ENCODE measurements at regions of chr9 and their contacts with region 1.

Region 1: DNA sequence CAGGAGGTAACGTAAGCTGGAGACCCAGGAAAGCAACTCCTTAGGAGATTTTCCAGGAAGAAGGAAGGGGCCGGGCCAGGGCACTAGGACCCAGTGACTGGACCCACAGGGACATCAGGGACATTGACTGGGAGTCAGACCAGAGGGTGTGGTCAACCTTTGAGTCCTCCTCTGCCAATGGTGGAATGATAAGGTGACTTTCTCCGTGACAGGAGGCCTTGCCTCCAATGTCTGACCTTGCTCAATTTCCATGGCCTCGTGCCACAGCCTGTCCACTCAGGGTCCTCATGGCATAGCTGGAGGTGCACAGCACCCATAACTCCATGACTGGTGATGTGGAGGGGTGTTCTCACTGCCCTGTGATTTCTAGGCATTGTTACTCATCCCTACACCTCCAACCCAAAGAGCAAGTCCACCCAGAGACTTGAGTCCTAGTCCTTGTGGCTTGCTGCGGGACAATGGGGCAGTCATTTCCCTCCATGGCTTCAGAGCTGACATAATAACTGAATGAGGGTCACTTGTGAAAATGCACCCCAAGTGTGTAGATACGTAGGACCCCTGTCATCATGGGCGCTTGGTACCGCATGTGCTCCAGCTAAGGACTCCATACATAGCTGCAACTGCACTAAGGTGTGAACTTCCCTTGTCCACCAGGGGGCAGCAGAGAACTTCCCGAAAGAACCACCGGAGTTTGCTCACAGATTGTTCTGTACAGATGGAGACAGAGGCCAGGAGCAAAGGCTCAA is 4.1 kb upstream of the AMBP start:
- DNase-seq: peak; percentile 92 to 94
- ATAC-seq: peak; percentile 74 to 83
- H3K4me3 ChIP-seq: no peak overlapping the region
- H3K27ac ChIP-seq: peak overlapping the region; percentile 93 to 94
- H3K4me1 ChIP-seq: peaks cover 75% of the 10 kb centered on the region
- CTCF ChIP-seq: peak; percentile 92
- EP300 ChIP-seq: no peak
- POLR2A ChIP-seq: no peak
- RAD21 ChIP-seq: peak; percentile 93 to 95

Region 2: DNA sequence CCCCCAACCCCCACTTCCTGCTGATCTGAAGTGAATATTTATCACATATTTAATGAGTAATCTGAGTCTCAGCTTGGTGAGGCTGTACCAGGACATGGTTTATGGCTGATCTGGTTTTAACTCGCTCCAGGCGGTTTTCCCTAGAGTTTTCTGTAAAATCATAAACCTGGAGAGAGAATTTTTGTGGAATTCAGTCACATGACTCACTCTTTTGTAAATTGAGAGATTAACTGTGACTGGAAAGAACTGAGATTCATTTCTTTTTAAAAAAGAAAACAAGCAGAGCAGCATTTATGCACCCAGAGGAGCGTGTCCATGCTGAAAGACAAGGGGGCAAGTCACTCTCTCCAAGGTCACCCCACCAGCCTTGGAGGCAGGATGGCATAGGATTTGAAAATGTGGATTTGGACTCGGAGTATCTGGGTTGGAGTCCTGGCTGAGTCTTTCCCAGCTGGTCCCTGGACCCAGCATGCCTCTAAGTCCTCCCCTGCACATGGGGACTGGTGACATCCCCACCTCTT is 124.3 kb before region 1 on chr9:
- CTCF ChIA-PET with region 1: no interaction called
- POLR2A ChIA-PET with region 1: no interaction called
- DNase-seq: peak; percentile 37 to 52
- ATAC-seq: peak; percentile 24 to 53; a peak in 3 of 6 replicates
- H3K4me3 ChIP-seq: no peak overlapping the region
- H3K27ac ChIP-seq: peak overlapping the region; percentile 65 to 82
- H3K4me1 ChIP-seq: peaks cover 46% of the 10 kb centered on the region
- CTCF ChIP-seq: no peak
- EP300 ChIP-seq: no peak
- POLR2A ChIP-seq: no peak
- RAD21 ChIP-seq: no peak

Region 3: DNA sequence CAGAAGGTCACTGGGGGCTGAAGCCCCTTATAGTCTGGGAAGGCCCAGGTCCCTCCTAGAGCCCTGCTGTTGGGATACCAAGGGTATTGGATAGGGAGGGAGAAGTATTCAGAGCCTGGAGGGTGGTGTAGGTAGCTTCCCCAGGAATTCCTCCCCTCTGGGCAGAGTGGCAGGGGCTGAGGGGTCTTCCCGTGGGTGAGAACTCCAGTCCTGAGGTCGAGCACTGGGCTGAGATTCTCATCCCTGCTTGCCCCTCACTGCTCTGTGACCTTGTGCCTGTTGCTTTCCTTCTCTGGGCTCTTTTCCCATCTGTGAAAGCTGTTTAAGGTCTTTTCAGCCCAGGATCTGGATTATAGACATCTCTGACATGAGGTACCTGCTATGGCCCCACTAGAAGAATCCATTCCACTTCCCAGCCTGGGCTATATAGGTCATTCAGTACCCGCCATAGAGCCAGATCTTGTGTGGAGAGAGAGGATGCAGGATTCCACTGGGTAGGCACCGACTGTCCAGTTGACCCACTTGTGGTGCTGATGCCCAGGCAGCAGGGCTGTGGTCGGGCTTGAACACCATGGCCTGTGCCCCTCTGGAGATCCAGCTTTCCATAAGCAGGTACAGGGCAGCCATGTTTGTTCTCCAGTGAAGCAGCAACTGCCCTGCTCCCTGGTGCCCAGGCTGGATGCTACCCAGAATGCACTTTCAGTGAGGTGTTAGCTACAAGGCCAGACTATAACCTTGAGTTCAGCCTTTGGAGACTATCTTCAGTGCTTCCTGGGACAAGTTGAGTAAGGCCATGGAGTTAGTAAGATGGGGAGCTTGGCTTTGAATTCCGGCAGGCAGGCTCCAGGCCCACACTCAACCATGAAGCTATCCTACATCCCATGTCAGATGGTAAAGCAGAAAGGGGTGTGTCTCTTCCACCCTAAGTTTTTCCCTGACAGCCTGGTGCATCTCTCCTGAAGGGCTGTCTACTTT is 64.2 kb before region 1 on chr9:
- CTCF ChIA-PET with region 1: interaction called, 11 read pairs
- POLR2A ChIA-PET with region 1: no interaction called
- DNase-seq: no peak
- ATAC-seq: no peak
- H3K4me3 ChIP-seq: no peak overlapping the region
- H3K27ac ChIP-seq: no peak overlapping the region
- H3K4me1 ChIP-seq: no peaks in the 10 kb centered on the region
- CTCF ChIP-seq: no peak
- EP300 ChIP-seq: no peak
- POLR2A ChIP-seq: no peak
- RAD21 ChIP-seq: no peak

Region 4: DNA sequence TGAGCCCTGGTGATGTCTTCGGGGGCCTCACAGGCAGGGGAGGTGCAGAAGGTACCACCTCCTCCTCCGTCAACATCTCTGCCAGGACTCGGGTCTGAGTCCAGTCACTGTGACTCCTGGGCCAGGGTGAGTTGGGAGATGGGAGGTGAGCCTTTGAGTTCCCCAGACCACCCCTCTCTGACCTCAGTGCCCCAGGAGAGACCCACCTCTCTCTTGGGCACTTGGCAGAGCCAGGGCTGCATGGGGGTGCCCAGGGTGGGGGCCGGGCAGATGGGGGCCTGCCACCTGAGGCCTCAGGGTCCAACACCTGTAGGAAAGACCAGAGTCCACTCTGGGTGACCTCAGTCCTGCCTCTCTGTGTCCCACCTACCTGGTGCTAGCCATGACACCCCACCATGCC is 10.1 kb after region 1 on chr9:
- CTCF ChIA-PET with region 1: interaction called, 80 read pairs
- POLR2A ChIA-PET with region 1: no interaction called
- DNase-seq: no peak
- ATAC-seq: no peak
- H3K4me3 ChIP-seq: no peak overlapping the region
- H3K27ac ChIP-seq: no peak overlapping the region
- H3K4me1 ChIP-seq: peaks cover 3% of the 10 kb centered on the region; the same call in 1 of the 3 replicates
- CTCF ChIP-seq: no peak
- EP300 ChIP-seq: no peak
- POLR2A ChIP-seq: no peak
- RAD21 ChIP-seq: no peak

Region 5: DNA sequence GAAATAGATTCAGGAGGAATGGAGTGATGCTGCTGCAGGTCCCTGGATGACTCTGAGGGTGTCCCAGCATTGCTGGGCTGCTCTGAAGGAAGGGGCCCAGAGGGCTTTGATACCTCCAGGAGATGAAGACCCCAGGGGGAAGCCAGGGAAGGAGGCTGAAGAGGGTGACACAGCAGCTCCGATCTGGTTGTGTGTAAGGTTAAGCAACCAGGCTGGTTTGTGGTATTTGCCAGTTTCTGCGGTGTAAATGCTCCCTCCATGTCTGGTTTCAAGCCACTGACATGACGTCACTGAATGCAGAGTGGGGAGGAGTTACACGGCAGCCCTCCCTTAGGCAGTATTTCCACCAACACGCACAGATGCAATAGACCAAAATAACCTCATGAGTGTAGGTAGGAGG is 200.7 kb after region 1 on chr9:
- CTCF ChIA-PET with region 1: interaction called, 191 read pairs
- POLR2A ChIA-PET with region 1: interaction called, 3 read pairs
- DNase-seq: peak in 1 of 2 experiments; percentile 46
- ATAC-seq: peak; percentile 25 to 31; a peak in 4 of 6 replicates
- H3K4me3 ChIP-seq: no peak overlapping the region
- H3K27ac ChIP-seq: peak overlapping the region; percentile 53 to 88; a peak in 4 of 6 replicates
- H3K4me1 ChIP-seq: peaks cover 69% of the 10 kb centered on the region
- CTCF ChIP-seq: no peak
- EP300 ChIP-seq: no peak
- POLR2A ChIP-seq: no peak
- RAD21 ChIP-seq: no peak

Region 6: DNA sequence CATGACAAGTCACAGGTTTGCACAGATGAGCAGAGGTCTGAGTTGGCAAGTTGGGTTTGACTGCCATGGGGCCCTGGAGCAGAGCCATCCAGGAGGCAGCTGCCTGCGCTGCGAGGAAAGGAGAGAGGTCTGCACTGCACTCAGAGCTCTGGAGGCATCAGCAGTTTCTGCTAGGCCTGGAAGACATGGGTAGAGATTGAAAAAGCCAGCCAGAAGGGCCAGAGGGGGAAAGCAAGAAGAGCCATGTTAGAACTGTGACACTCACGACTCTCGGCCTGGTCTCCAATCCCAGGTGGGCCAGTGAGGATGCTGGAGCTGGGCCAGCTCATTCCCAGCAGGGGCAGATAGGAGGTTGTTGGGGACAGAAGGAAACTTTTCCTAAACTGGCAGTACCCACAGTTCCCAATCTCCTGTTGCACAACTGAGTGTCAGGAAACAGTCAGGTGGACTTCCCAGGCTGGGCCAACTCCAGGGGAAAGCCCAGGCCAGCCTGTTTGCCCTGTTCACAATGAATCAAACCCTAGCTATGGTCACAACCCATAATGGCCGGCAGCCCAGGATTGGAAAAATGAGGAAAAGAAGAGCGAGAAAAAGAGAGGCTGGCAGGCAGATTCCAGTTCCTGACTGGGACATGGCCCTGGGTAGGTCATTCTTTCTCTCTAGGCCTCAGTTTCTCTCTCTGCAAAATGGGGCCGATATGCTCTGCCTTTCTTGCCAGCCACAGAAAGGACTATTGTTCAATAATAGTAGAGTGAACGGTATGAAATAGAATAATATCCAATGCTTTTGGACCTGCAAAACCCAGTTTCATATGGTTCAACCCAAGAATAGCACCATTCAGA is 232.9 kb after region 1 on chr9:
- CTCF ChIA-PET with region 1: interaction called, 17 read pairs
- POLR2A ChIA-PET with region 1: no interaction called
- DNase-seq: no peak
- ATAC-seq: peak; percentile 25 to 34; a peak in 3 of 6 replicates
- H3K4me3 ChIP-seq: no peak overlapping the region
- H3K27ac ChIP-seq: no peak overlapping the region
- H3K4me1 ChIP-seq: peaks cover 7% of the 10 kb centered on the region; the same call in 2 of the 3 replicates
- CTCF ChIP-seq: no peak
- EP300 ChIP-seq: no peak
- POLR2A ChIP-seq: no peak
- RAD21 ChIP-seq: no peak